CD4-positive, alpha-beta memory T cell (primary cell): ENCODE measurements at regions of chr3 and their contacts with region 1.

Region 1: GRCh38 chr3:152399374-152399773 is 130.6 kb downstream of the MBNL1 start:
- DNase-seq: peak in 1 of 5 donors; percentile 45
- H3K4me3 ChIP-seq: no peak overlapping the region
- H3K4me3 Mint-ChIP-seq: peak overlapping the region in 6 of 8 donors; percentile 5 to 69 (median 55)
- H3K27ac ChIP-seq: peak overlapping the region; percentile 14
- H3K27ac Mint-ChIP-seq: peak overlapping the region; percentile 25 to 93 (median 83)
- H3K4me1 ChIP-seq: peaks cover 78% of the 10 kb centered on the region
- H3K4me1 Mint-ChIP-seq: peaks cover 52 to 87% (median 69%) of the 10 kb centered on the region in 4 donors
- H3K27me3 ChIP-seq: no peaks in the 10 kb centered on the region
- H3K27me3 Mint-ChIP-seq: no peaks in the 10 kb centered on the region

Region 2: DNA sequence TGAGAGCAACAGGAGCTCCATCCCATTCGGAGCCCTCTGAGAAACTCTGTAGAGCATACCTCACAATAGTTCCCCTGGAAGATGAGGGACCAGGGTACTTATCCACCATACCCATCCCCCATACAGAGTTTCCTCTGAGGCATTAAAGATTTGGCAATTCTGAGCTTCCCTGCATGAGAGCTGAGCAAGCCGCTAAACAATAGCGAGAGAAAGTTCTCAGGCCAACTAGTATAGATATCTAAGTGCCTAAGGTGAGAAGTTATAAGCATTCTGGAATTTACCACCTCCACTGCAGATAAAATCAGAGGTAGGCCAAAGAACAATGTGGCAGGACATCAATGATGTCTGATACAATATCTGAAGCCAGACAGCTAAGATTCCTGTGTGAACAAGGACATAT is 259.7 kb before region 1 on chr3:
- CTCF ChIA-PET with region 1: no interaction called
- POLR2A ChIA-PET with region 1: no interaction called
- intact Hi-C with region 1: no loop called
- DNase-seq: no peak
- H3K4me3 ChIP-seq: no peak overlapping the region
- H3K4me3 Mint-ChIP-seq: no peak overlapping the region
- H3K27ac ChIP-seq: no peak overlapping the region
- H3K27ac Mint-ChIP-seq: no peak overlapping the region
- H3K4me1 ChIP-seq: no peaks in the 10 kb centered on the region
- H3K4me1 Mint-ChIP-seq: no peaks in the 10 kb centered on the region
- H3K27me3 ChIP-seq: no peaks in the 10 kb centered on the region
- H3K27me3 Mint-ChIP-seq: no peaks in the 10 kb centered on the region

Region 3: DNA sequence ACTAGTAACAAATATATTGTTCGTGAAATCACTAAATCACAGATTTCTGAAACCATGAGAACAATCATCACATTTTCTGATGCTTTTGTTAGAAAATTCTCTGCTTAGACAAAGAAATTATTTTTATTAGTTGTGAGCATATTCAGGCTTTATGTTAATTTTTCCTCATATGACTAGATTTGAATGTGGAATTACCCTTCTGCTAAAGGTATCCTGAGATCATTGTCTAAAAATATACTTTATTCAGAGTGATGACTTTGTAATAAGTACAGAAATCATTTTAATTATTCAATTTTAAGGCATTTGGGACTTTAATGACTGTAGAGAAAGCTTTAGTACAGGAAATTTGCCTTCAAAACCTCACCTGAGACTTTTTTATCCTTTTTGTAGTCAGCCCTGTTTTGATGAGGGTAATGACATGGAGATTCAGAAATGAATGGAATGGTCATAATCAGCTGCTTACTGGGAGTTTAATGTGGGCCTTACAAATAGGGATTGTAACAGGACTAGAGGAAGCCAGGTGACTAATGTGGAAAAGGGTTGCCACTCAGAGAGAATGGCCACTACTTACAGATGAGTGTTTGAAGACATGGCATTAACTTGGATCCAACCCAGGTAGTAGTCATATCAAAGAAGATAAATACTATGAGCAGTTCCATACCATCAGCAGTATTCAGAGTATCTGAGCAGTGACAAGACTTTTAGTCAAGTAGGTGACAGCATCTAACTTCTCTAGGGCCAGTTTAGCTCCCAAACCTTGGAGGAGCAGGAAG is 17.6 kb after region 1 on chr3:
- CTCF ChIA-PET with region 1: no interaction called
- POLR2A ChIA-PET with region 1: interaction called, 8 read pairs
- intact Hi-C with region 1: loop called (anchors 2 kb)
- DNase-seq: no peak
- H3K4me3 ChIP-seq: no peak overlapping the region
- H3K4me3 Mint-ChIP-seq: peak overlapping the region in 1 of 8 donors; percentile 21
- H3K27ac ChIP-seq: peak overlapping the region; percentile 2
- H3K27ac Mint-ChIP-seq: peak overlapping the region in 6 of 7 donors; percentile 23 to 59 (median 36)
- H3K4me1 ChIP-seq: peaks cover 62% of the 10 kb centered on the region
- H3K4me1 Mint-ChIP-seq: peaks cover 39 to 80% (median 62%) of the 10 kb centered on the region in 4 donors
- H3K27me3 ChIP-seq: no peaks in the 10 kb centered on the region
- H3K27me3 Mint-ChIP-seq: no peaks in the 10 kb centered on the region